Spleen (tissue), 13 donors: ENCODE measurements at regions of chr17 and their contacts with region 1.

Region 1: DNA sequence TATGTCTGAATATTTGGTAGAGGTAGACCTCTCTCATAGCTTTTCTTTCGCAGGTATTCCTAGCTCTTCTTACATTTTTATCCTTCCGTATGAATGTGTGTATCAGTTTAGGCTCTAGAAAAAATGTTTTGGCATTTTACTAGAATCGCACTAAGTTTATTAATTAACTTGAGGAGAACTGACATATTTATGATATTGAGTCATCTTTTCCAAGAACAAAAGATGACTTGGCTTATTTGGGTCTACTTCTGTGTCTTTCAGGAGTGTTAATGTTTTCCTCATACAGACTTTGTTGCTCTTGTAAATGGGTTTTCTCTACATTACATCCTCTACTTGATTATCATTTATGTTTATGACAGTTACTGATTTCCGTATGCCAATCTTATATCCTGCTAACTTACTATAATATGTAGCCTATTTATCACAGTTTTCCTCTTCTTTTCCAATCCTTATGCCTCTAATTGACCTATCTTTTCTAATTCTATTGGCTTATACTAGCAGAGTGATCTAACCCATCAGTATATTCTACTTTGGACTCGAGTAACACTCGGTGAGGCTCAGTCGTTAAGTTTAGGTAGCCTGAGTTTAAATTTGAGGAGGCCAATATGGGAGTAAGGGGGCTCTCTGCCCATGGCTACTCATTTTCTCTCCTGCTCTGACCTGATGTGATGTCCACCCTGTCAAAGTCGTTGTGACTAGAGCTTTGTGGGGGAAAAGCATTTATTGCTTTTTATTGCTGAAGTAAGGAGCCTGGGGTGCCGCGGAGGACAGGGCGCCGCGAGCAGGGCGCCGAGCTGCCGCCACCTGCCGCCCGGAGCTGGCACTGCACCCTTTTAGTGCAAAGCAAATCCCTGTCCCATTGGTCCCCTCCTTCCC is 20.0 kb downstream of the ST6GALNAC1 start:
- DNase-seq: peak; percentile 94
- H3K4me3 ChIP-seq: no peak overlapping the region
- H3K27ac ChIP-seq: no peak overlapping the region
- H3K4me1 ChIP-seq: peaks cover 0 to 18% (median 12%) of the 10 kb centered on the region in 6 donors
- H3K27me3 ChIP-seq: peaks cover 0 to 4% (median 0%) of the 10 kb centered on the region in 7 donors
- CTCF ChIP-seq: peak; percentile 86 to 98 (median 96)
- POLR2A ChIP-seq: peak in 1 of 3 donors; percentile 7

Region 2: DNA sequence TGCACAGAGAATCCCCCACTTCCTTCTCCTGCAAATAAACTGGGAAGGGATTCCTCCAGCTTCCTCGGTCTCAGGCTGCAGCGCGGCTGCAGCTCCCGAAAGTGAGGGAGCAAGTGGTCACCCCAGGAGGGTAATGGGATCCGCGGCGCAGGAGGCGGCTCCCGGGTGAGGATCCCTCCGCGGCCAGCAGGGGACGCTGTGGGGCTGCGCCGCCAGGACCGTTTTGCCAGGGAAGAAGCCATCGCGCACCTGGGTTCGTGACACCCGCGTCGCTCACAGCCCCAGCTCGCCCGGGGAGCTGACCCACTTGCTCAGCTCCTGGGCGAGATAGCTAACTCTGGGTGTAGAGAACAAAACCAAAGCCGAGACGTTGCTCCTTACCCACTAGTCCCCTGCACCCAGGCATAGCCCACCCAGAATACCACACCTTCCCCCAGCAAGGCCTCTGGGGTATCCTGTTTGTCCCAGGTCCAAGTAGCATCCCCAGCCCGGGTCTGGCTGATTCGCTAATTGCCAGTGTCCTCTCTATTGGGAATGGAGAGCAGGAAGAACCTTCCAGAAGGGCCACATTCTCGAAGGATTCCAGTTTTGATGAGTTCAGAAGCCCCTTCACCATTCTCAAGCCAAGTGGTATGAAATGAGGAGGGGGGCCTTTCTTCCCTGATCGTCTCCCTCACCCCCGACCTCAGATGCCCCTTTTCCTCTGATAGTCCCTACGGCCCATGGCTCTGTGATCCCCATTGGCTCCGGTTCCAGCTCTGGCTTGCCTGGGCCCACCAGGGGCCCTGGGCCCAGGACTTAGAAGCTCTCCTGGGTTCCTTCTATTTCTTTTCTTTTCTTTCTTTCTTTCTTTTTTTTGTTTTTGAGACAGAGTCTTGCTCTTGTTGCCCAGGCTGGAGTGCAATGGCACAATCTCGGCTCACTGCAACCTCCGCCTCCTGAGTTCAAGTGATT is 100.1 kb before region 1 on chr17:
- intact Hi-C with region 1: loop called (anchors 5 kb)
- DNase-seq: peak; percentile 97
- H3K4me3 ChIP-seq: peak overlapping the region in 1 of 8 donors; percentile 27
- H3K27ac ChIP-seq: peak overlapping the region in 1 of 8 donors; percentile 21
- H3K4me1 ChIP-seq: peaks cover 16 to 56% (median 38%) of the 10 kb centered on the region in 6 donors
- H3K27me3 ChIP-seq: peaks cover 0 to 20% (median 0%) of the 10 kb centered on the region in 7 donors
- CTCF ChIP-seq: peak; percentile 94 to 100 (median 99)
- POLR2A ChIP-seq: no peak